ENCODE measurements at regions of chr2 and their contacts with region 1.

Region 1: DNA sequence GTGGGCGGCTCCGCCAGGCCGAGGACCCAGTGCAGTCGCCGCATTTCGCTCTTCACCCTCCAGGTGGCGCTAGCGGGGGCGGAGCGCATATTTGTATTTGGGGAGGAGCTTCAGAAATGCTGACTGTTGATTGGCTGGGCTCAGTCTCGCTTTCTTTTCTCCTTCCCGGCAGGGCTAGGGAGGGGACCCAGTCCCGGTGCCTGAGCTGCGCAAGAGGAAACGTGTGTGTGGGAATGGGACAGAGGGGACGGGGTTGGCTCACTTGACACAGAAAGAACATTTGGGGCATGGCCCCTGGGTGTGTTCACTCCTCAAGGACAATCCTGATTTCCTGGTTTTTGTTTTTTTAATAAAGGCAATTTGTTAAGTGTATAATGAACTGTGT is 20.3 kb upstream of the DNMT3A start:
- DNase-seq: peak; percentile 96
- ATAC-seq: peak; percentile 98
- H3K4me3 Mint-ChIP-seq: peak overlapping the region; percentile 82
- H3K27ac Mint-ChIP-seq: peak overlapping the region; percentile 93
- H3K4me1 Mint-ChIP-seq: peaks cover 20% of the 10 kb centered on the region
- H3K27me3 Mint-ChIP-seq: no peaks in the 10 kb centered on the region

Region 2: GRCh38 chr2:25158096-25158852 is 203.8 kb before region 1 on chr2:
- CTCF ChIA-PET with region 1: no interaction called
- POLR2A ChIA-PET with region 1: no interaction called
- DNase-seq: no peak
- ATAC-seq: no peak
- H3K4me3 Mint-ChIP-seq: no peak overlapping the region
- H3K27ac Mint-ChIP-seq: no peak overlapping the region
- H3K4me1 Mint-ChIP-seq: peaks cover 12% of the 10 kb centered on the region
- H3K27me3 Mint-ChIP-seq: peaks cover 4% of the 10 kb centered on the region

Region 3: GRCh38 chr2:25294573-25295462 is 67.2 kb before region 1 on chr2:
- CTCF ChIA-PET with region 1: interaction called, 16 read pairs
- POLR2A ChIA-PET with region 1: interaction called, 7 read pairs
- DNase-seq: peak; percentile 92
- ATAC-seq: peak; percentile 92
- H3K4me3 Mint-ChIP-seq: peak overlapping the region; percentile 70
- H3K27ac Mint-ChIP-seq: peak overlapping the region; percentile 93
- H3K4me1 Mint-ChIP-seq: peaks cover 73% of the 10 kb centered on the region
- H3K27me3 Mint-ChIP-seq: no peaks in the 10 kb centered on the region

Region 4: GRCh38 chr2:25314514-25315315 is 47.3 kb before region 1 on chr2:
- CTCF ChIA-PET with region 1: interaction called, 30 read pairs
- POLR2A ChIA-PET with region 1: interaction called, 11 read pairs
- DNase-seq: peak; percentile 88
- ATAC-seq: peak; percentile 84
- H3K4me3 Mint-ChIP-seq: peak overlapping the region; percentile 81
- H3K27ac Mint-ChIP-seq: peak overlapping the region; percentile 97
- H3K4me1 Mint-ChIP-seq: peaks cover 54% of the 10 kb centered on the region
- H3K27me3 Mint-ChIP-seq: no peaks in the 10 kb centered on the region

Region 5: DNA sequence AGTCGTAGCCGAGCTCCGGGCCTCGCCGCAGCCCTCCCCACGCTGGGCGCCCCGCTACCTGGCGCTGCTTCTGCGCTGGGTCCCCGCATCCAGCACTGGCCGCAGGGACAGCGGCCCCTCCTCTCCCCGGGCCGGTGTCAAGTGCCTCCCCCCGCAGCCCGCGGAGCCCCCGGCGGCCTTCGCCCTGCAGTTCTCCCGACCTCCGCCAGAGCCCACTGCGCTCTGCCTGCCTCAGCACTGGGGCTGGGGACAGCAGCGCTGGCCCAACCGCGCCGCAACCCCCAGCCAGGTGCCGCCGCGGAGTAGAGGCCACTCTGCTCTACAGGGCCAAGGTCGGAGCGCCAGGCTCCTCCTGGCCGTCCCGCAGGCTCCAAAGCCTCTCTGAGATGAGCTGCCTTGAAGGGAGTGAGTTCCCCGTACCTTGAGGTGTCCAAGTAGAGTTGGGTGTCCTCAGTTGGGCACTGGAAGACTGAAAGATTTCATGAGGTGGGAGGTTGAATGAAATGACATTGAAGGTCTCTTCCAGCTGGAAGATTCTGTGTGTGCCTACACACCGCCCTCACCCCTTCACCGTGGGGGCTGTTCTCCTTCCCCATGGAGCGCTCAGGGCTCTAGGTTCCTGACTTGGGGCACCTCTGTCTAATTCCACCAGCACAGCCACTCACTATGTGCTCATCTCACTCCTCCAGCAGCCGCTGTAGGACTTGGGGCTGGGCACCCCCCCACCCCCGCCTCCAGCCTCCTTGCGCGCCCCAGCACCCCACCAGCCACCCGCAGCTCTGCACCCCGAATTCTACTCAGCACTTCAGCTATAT is 19.5 kb before region 1 on chr2:
- CTCF ChIA-PET with region 1: interaction called, 110 read pairs
- POLR2A ChIA-PET with region 1: interaction called, 20 read pairs
- DNase-seq: peak; percentile 89
- ATAC-seq: peak; percentile 87
- H3K4me3 Mint-ChIP-seq: peak overlapping the region; percentile 79
- H3K27ac Mint-ChIP-seq: peak overlapping the region; percentile 89
- H3K4me1 Mint-ChIP-seq: peaks cover 33% of the 10 kb centered on the region
- H3K27me3 Mint-ChIP-seq: no peaks in the 10 kb centered on the region

Region 6: DNA sequence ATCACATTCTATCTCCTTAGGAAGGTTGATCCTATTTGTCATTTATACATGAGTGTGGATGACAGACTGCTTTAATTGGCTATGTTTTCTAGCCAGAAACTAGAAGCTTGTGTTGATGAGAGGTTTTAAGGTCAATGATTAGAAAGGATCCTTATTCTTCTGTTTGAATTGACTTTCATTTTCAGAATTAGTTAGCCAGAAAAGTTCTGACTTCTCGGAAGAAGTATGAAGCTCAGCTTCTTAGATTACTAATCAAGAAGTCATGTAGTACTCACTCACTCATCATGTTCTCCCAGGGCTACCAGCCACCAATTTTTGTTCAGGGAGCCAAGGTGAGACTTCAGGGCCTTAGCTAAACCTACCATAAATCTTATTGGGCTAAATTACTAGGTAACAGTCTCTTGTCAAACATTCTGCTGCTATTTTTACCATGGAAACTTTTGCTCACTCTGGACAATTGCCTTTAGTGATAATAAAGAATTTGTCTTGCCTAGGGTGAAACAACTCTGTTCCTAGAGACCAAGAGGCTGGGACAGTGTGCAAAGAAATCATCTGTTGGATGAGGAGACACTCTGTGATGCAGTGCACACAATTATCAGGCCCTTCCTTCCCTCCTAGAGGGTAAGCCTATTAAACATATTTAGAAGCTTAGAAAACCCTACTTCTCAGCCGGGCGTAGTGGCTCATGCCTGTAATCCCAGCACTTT is 91.3 kb after region 1 on chr2:
- CTCF ChIA-PET with region 1: interaction called, 19 read pairs
- POLR2A ChIA-PET with region 1: interaction called, 4 read pairs
- DNase-seq: peak; percentile 34
- ATAC-seq: peak; percentile 87
- H3K4me3 Mint-ChIP-seq: peak overlapping the region; percentile 36
- H3K27ac Mint-ChIP-seq: peak overlapping the region; percentile 83
- H3K4me1 Mint-ChIP-seq: peaks cover 28% of the 10 kb centered on the region
- H3K27me3 Mint-ChIP-seq: no peaks in the 10 kb centered on the region

Region 7: GRCh38 chr2:25567406-25567805 is 205.4 kb after region 1 on chr2:
- CTCF ChIA-PET with region 1: interaction called, 25 read pairs
- POLR2A ChIA-PET with region 1: no interaction called
- DNase-seq: peak; percentile 52
- ATAC-seq: peak; percentile 74
- H3K4me3 Mint-ChIP-seq: no peak overlapping the region
- H3K27ac Mint-ChIP-seq: peak overlapping the region; percentile 73
- H3K4me1 Mint-ChIP-seq: peaks cover 19% of the 10 kb centered on the region
- H3K27me3 Mint-ChIP-seq: no peaks in the 10 kb centered on the region

Measured in activated CD8-positive, alpha-beta T cell treated with anti-CD3 and anti-CD28 coated beads, Interleukin-2, amount 10 ng/mL, durations not matched to agents 7 days and 5 days (primary cell).